ENCODE measurements at regions of chr15 and their contacts with region 1.

Region 1: DNA sequence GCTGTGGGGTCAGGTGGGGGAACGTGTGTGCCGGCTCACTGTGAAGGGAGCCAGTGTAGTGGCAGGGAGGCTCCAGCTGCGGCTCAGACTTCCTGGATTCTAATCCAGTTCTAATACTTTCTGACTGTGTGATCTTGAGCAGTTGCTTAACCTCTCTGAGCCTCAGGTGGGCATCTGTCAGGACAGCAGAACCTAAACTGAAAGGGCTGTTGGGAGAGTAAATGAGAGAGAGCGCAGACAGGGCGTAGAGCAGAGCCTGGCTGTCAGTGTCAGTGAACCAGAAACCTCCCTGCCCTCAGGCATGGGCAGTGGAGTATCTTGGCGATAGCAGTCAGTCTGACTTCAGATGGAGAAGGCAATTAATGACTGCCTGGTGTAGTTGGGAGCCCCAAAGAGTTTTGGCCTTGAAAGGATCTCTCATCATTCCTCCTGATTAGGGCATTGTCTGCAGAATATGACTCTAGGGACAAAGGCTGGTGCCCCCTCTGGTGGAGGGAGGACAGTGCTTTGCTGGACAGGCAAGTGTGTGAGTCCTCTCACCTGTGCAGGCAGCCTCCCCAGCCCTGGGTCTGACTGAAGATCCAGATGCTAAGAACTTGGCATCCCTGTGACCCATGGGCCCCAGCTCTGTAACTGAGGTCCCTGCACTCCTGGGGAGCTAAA is 9.6 kb downstream of the KBTBD13 start:
- DNase-seq: peak; percentile 57 to 81
- H3K4me3 ChIP-seq: no peak overlapping the region
- H3K4me1 ChIP-seq: peaks cover 20% of the 10 kb centered on the region
- H3K27me3 ChIP-seq: no peaks in the 10 kb centered on the region

Region 2: DNA sequence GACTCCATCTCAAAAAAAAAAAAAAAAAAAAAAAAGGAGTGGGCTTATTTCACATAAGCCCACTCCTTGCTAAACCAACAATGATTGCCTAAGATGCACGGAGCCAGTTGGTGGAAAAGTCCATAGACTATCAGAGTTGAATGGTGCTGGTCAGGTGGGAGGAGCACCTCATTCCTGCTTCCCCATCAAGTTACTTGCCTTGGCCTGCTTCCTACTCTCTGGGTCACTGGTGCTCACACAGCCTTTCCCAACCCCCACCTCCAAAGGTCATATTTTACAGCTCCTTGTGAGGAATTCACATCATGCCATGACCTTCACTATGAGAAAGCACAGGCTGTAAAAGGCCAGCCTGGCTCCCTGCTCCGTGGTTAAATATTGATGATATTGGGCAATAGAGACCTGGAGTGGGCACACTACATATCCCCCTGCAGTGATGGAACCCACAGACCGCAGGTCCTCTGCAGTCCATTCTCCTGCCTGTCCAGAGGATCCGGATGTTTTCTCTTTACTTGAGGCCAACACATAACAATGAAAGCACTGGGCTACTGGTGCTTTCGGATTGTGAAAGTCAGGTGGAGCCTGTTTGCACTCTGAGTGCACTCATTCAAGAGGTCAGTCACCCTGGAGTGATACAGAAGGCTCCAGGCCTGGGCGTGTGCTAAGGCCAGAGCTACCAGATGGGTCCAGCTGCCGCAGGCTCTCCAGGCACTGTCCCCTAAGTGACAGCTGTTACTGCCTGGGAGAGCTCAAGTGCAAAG is 41.2 kb before region 1 on chr15 and contains the start of gene SLC51B:
- in situ Hi-C with region 1: loop called (anchors 5 kb)
- DNase-seq: no peak
- H3K4me3 ChIP-seq: no peak within 1 kb of the TSS
- H3K4me1 ChIP-seq: peaks cover 26% of the 10 kb centered on the region
- H3K27me3 ChIP-seq: no peaks in the 10 kb centered on the region

Measured in HAP-1 (cell line).